ENCODE measurements at regions of chrX and their contacts with region 1.

Region 1: DNA sequence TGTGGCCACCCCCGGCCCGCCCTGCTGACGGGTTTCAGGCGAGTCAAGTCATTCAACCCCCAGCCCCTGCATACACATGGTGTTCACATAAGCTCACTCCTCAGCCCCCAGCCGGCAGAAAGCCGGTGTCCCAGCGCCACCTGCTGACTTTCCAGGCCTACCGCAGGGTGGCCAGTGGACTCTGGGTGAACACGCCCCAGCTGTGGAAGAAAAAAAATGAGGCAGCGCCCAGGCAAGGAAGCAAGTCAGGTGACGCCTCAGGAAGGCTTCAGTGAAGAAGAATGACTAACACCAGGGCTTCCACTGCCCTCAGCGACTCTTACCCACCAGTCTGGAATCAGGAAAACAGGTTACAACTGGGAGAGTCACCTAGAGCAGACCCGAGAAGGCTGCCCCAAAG is 15.8 kb downstream of the BCAP31 start:
- DNase-seq: peak; percentile 16
- H3K4me3 ChIP-seq: no peak overlapping the region
- CTCF ChIP-seq: peak; percentile 60

Region 2: GRCh38 chrX:153554519-153555167 is 153.8 kb before region 1 on chrX:
- CTCF ChIA-PET with region 1: interaction called, 15 read pairs
- POLR2A ChIA-PET with region 1: no interaction called
- DNase-seq: no peak
- H3K4me3 ChIP-seq: no peak overlapping the region
- CTCF ChIP-seq: peak; percentile 73

Region 3: DNA sequence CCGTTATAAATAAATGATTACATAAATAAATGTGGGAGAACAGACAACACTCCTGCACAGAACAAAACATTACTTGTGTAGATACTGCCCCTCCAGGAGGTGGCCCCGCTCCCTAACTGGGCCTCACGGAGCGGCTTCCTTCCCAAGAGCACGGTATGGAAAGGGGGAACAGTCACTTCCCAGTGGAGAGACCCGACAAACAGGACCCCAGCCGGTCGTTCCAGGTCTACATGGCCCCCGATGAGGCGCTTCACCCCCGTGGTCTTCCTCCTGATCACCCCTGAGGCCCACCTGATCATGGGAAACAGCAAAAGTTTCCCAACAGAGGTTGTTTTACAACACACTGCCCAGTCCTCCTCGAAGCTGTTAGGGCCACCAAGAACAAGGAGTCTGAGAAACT is 27.2 kb before region 1 on chrX:
- CTCF ChIA-PET with region 1: no interaction called
- POLR2A ChIA-PET with region 1: no interaction called
- DNase-seq: no peak
- H3K4me3 ChIP-seq: no peak overlapping the region
- CTCF ChIP-seq: no peak

Region 4: DNA sequence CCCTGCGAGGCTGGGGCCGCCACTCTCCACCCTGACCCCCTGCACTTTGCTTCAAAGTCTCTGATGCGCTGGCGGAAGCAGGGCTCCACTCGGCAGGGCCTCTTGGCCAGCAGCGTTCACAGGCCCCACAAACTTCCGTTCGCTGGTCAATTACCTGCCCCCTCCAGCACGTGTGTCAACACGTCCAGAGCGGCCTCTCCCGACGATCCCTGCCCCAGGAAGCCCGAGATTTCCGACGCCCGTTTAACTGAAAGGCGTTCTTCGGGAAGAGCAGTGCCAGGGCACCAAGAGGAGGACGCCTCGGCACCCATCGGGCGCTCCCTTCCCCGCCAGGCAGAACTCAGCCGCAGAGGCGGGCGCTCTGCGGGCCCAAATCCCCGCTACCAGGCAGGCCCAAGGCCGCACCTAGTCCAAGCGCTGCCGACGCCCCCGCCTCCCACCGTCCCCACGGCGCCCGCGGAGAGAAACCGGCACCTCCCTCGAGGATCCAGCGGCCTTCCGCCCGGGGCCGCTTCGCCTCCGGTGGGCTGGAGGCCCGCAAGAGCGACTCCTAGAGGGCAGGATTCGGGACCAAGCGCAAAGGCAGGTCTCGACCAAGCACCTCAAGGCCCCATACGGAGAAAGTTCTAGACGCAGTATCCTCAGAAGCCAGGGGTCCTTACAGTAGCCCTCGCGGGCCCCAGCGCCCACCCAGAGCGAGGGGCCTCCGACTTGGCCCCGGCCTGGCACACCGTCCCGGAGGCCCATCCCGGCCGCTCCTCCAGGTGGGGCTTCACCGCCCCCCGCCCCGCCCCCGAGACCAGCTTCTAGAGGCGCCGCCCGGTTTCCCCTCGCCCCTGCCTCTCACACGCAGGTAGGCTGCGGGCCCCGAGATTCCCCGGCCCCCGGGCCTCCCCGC is 15.2 kb after region 1 on chrX:
- CTCF ChIA-PET with region 1: interaction called, 12 read pairs
- POLR2A ChIA-PET with region 1: no interaction called
- DNase-seq: no peak
- H3K4me3 ChIP-seq: peak overlapping the region; percentile 66
- CTCF ChIP-seq: peak; percentile 31